CD8-positive, alpha-beta memory T cell (primary cell): ENCODE measurements at regions of chr22 and their contacts with region 1.

Region 1: DNA sequence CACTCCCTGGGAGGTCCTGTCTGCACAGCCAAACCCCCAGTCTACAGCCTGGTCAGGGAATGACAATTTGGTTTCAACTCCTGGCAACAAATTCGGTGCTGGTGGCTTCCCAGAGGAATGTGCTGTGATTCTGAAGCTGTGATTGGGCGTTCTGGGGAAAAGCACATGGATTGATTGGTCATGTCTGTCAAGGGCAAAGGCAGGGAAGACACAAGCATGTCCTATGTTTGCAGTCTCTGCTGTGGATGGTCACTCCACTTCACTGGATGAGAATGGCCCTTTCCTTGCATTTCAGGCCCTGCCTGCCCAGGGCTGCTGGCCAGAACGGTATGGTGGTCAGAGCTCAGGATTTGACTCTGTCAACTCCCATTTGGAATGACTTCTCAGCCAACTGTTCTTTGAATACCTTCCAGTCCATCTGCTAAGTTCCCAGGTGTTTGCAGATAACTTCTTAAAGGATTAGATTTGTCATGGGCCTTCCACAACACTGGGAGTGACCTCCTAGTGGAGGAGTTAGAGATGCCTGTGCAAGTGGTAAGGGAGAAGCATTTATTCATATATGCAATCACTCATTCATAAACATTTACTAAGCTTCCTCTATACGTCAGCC is 42.7 kb downstream of the SGSM1 start:
- DNase-seq: no peak
- H3K4me3 ChIP-seq: no peak overlapping the region
- H3K4me3 Mint-ChIP-seq: peak overlapping the region in 1 of 7 donors; percentile 71
- H3K27ac ChIP-seq: no peak overlapping the region
- H3K27ac Mint-ChIP-seq: no peak overlapping the region
- H3K4me1 ChIP-seq: no peaks in the 10 kb centered on the region
- H3K4me1 Mint-ChIP-seq: peaks cover 18 to 29% (median 23%) of the 10 kb centered on the region in 3 donors
- H3K27me3 ChIP-seq: no peaks in the 10 kb centered on the region
- H3K27me3 Mint-ChIP-seq: no peaks in the 10 kb centered on the region

Region 2: DNA sequence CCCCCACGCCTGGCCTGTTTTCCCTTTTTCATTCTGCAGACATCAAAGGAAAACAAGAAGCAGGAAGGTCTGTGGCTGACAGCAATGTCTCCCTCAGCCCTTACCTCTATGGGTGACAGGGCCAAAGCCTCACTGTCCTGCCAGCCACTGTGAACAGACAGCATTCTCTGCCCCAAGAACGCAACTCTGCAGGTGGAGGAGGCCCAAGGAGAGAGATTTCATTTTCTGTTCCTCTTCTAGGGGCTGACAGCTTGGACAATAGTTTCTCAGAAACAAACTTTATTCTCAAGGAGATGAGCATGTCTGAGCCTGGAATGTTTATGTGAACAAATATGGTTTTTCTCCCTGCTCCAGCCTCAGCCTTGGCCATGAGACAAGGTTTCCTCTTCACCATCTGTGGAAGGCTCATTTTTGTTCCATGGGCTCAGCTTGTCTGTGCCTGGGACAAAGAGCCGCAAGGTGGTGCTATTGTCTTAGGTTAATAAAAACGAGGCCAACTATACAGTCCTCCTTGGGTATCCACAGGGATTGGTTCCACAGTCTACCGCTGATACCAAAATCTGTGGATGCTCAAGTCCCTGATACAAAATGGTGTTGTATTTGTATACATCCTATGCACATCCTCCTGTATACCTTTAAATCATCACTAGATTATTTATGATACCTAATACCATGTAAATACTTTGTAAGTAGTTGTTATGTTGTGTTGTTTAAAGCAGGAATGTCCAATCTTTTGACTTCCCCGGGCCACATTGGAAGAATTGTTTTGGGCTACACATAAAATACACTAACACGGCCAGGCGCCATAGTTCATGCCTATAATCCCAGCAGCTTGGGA is 79.9 kb before region 1 on chr22:
- CTCF ChIA-PET with region 1: interaction called, 10 read pairs
- POLR2A ChIA-PET with region 1: no interaction called
- DNase-seq: peak in 4 of 5 donors; percentile 11 to 50 (median 19)
- H3K4me3 ChIP-seq: no peak overlapping the region
- H3K4me3 Mint-ChIP-seq: no peak overlapping the region
- H3K27ac ChIP-seq: no peak overlapping the region
- H3K27ac Mint-ChIP-seq: no peak overlapping the region
- H3K4me1 ChIP-seq: no peaks in the 10 kb centered on the region
- H3K4me1 Mint-ChIP-seq: no peaks in the 10 kb centered on the region
- H3K27me3 ChIP-seq: no peaks in the 10 kb centered on the region
- H3K27me3 Mint-ChIP-seq: peaks cover 3 to 24% of the 10 kb centered on the region in 2 donors

Region 3: GRCh38 chr22:24803011-24803542 is 45.6 kb before region 1 on chr22:
- CTCF ChIA-PET with region 1: interaction called, 12 read pairs
- POLR2A ChIA-PET with region 1: no interaction called
- DNase-seq: peak; percentile 26 to 60 (median 52)
- H3K4me3 ChIP-seq: no peak overlapping the region
- H3K4me3 Mint-ChIP-seq: peak overlapping the region in 2 of 7 donors; percentile 34 to 38
- H3K27ac ChIP-seq: no peak overlapping the region
- H3K27ac Mint-ChIP-seq: peak overlapping the region in 2 of 8 donors; percentile 26 to 75
- H3K4me1 ChIP-seq: no peaks in the 10 kb centered on the region
- H3K4me1 Mint-ChIP-seq: peaks cover 13 to 17% (median 14%) of the 10 kb centered on the region in 3 donors
- H3K27me3 ChIP-seq: no peaks in the 10 kb centered on the region
- H3K27me3 Mint-ChIP-seq: peaks cover 0 to 1% of the 10 kb centered on the region in 2 donors

Region 4: DNA sequence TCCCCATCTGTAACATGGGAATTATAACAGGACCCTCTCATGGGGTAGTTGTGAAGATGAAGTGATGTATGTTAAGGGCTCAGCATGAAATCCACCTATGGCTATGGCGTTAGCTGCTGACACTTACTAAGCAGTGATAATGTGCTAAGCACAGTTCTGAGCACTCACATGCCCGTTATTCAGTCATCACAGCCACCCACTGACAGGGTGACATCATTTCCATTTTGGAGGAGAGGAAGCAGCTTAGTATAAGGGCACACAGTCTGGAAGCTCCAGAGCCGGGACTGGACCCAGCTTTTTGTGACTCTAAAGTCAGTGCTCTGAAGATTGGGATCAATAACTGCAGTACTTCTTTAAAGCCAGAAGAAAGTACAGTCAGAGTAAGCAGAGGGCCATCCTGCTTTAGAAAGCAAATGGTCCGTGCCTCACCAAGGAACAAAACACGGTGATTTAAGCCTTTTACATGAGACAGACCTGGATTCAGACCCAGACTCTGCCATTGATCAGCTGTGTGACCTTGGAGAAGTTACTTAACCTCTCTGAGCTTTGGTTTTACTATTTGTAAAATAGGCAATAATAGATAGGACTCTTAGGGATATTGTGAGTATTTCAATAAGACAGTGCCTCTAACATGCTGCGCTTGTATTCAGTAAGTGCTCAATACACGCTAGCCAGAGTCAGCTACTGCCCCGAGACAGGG is 18.8 kb after region 1 on chr22:
- CTCF ChIA-PET with region 1: no interaction called
- POLR2A ChIA-PET with region 1: no interaction called
- DNase-seq: no peak
- H3K4me3 ChIP-seq: no peak overlapping the region
- H3K4me3 Mint-ChIP-seq: no peak overlapping the region
- H3K27ac ChIP-seq: no peak overlapping the region
- H3K27ac Mint-ChIP-seq: peak overlapping the region in 1 of 8 donors; percentile 79
- H3K4me1 ChIP-seq: no peaks in the 10 kb centered on the region
- H3K4me1 Mint-ChIP-seq: no peaks in the 10 kb centered on the region
- H3K27me3 ChIP-seq: no peaks in the 10 kb centered on the region
- H3K27me3 Mint-ChIP-seq: peaks cover 7 to 19% of the 10 kb centered on the region in 2 donors